ENCODE measurements at regions of chr15 and their contacts with region 1.

Region 1: DNA sequence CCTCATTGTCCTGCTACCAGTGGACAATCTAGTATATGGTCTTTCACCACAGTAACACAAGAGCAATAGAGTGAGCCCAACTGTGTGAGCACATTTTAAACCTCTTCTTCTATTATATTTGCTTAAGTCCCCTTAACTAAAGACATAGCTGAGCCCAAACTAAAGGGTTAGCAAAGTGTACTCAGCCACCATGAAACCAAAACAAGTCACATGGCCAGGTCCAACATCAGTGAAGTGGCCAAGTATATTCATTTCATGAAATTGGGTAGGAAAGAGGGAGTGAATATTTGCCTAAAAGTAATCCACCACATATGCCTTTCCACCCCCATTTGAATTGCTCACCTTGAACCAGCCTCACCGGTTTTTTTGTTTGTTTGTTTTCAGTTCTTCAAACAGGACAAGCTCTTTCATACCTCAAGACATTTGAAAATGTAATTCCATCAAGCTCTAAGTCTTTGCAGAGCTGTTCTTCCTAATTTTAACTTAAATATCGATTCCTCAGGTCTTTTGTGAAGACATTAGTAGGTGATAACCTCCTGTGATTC is 327.0 kb upstream of the SEMA6D start:
- DNase-seq: no peak
- ATAC-seq: no peak
- H3K4me3 ChIP-seq: no peak overlapping the region
- H3K27ac ChIP-seq: no peak overlapping the region
- H3K4me1 ChIP-seq: no peaks in the 10 kb centered on the region
- H3K27me3 ChIP-seq: no peaks in the 10 kb centered on the region

Region 2: GRCh38 chr15:47332481-47332880 is 57.8 kb before region 1 on chr15:
- intact Hi-C with region 1: no loop called
- DNase-seq: no peak
- ATAC-seq: no peak
- H3K4me3 ChIP-seq: no peak overlapping the region
- H3K27ac ChIP-seq: no peak overlapping the region
- H3K4me1 ChIP-seq: no peaks in the 10 kb centered on the region
- H3K27me3 ChIP-seq: no peaks in the 10 kb centered on the region

Region 3: GRCh38 chr15:48202068-48202467 is 811.8 kb after region 1 on chr15:
- intact Hi-C with region 1: loop called in 1 of 4 experiments (anchors 5 kb)
- DNase-seq: no peak
- ATAC-seq: no peak
- H3K4me3 ChIP-seq: no peak overlapping the region
- H3K27ac ChIP-seq: no peak overlapping the region
- H3K4me1 ChIP-seq: no peaks in the 10 kb centered on the region
- H3K27me3 ChIP-seq: no peaks in the 10 kb centered on the region